ENCODE measurements at regions of chr11 and their contacts with region 1.

Region 1: GRCh38 chr11:70067591-70068341 is 10.4 kb upstream of the ANO1 start:
- DNase-seq: peak; percentile 86
- H3K4me3 ChIP-seq: no peak overlapping the region
- H3K4me3 Mint-ChIP-seq: peak overlapping the region; percentile 37
- H3K27ac Mint-ChIP-seq: peak overlapping the region; percentile 71
- H3K4me1 ChIP-seq: peaks cover 48% of the 10 kb centered on the region
- H3K4me1 Mint-ChIP-seq: peaks cover 38% of the 10 kb centered on the region
- H3K27me3 ChIP-seq: no peaks in the 10 kb centered on the region
- H3K27me3 Mint-ChIP-seq: no peaks in the 10 kb centered on the region
- CTCF ChIP-seq: peak in 1 of 2 experiments; percentile 23

Region 2: DNA sequence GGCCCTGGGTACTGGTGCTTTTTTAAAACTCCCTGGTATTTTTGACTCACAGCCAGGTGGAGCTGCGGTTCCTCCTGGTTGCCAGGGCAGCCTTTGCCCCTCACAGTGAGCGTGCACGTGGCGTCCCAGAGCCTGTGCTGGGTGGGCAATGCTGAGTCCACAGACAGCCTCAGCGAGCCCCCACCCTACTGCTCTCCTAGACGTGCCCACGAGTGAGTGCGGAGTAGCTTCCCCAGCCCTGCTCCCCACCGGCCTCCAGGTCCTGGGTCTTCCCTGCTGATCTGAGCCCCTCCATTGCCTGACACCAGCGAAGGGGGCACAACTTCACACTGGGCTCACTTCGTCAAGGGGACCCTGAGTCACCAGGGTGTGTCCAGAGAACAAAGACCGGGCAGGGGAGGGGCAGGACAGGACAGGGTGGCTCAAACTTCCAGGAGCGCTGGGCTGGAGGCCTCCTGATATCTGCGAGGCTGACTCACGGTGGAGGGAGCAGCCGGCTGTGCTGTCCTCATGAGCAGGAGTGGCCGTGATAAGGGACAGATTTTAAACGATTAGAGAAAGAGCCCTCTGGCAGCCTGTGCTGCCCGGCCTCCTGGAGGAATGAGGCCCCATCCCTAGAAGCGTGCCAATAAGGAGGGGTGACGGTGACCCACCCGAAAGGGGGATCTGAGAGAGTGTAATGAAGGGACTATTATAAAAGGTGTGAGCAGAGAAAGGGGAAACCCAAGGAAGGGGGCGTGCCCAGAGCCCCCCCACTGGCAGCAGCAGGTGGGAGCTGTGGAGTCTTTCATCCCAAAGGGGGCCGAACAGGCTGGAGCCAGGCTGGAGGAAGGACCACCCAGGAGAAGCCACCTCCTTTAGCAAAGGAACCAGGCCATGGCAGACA is 119.3 kb before region 1 on chr11:
- CTCF ChIA-PET with region 1: interaction called, 5 read pairs
- POLR2A ChIA-PET with region 1: no interaction called
- intact Hi-C with region 1: loop called (anchors 1 kb)
- DNase-seq: peak; percentile 86 to 94
- H3K4me3 ChIP-seq: no peak overlapping the region
- H3K4me3 Mint-ChIP-seq: peak overlapping the region; percentile 47
- H3K27ac Mint-ChIP-seq: peak overlapping the region; percentile 93
- H3K4me1 ChIP-seq: peaks cover 44% of the 10 kb centered on the region
- H3K4me1 Mint-ChIP-seq: peaks cover 31% of the 10 kb centered on the region
- H3K27me3 ChIP-seq: no peaks in the 10 kb centered on the region
- H3K27me3 Mint-ChIP-seq: no peaks in the 10 kb centered on the region
- CTCF ChIP-seq: peak; percentile 53 to 62

Region 3: DNA sequence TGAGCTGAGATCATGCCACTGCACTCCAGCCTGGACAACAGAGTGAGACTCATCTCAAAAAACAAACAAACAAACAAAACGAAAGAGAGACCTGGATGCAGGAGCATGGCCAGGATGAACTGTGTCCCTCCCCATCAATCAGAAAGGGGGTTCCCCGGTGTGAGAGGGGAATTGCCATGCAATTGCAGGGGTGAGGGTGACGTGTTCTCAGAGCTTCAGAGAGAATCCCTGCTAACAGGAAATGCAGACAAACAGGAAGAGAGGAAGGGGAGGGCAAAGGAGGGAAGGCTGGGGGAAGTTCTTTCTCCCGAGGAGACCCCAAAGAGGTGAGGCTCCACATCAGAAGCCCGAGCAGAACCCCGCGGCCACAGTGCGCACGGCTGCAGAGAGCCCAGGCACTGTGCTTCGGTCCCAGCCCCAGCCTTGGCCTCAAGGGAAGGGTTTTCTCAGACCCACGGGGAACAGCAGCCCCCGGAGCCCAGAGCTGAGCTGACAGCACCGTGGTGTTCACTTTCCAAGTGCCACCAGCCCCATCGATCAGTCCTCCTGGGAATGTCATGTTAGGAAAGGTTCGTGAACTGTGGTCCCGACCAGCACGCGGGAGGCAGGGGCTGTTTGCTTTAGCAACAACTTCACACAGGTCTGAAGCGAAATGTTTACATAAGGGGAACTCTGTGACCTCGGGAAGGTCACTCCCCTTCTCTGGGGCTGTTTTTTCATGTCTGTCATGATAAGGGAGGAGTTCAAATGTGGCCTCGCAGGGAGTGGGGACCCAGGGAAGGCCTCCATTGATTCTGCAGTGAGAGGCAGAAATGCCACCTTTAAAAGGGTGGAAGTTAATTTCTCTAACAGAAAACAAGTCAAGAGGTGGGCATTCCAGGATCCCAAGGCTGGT is 97.6 kb before region 1 on chr11:
- CTCF ChIA-PET with region 1: interaction called, 3 read pairs
- POLR2A ChIA-PET with region 1: no interaction called
- intact Hi-C with region 1: loop called (anchors 1 kb)
- DNase-seq: peak; percentile 89 to 94
- H3K4me3 ChIP-seq: no peak overlapping the region
- H3K4me3 Mint-ChIP-seq: peak overlapping the region; percentile 61
- H3K27ac Mint-ChIP-seq: peak overlapping the region; percentile 88
- H3K4me1 ChIP-seq: peaks cover 94% of the 10 kb centered on the region
- H3K4me1 Mint-ChIP-seq: peaks cover 63% of the 10 kb centered on the region
- H3K27me3 ChIP-seq: no peaks in the 10 kb centered on the region
- H3K27me3 Mint-ChIP-seq: no peaks in the 10 kb centered on the region
- CTCF ChIP-seq: no peak

Region 4: DNA sequence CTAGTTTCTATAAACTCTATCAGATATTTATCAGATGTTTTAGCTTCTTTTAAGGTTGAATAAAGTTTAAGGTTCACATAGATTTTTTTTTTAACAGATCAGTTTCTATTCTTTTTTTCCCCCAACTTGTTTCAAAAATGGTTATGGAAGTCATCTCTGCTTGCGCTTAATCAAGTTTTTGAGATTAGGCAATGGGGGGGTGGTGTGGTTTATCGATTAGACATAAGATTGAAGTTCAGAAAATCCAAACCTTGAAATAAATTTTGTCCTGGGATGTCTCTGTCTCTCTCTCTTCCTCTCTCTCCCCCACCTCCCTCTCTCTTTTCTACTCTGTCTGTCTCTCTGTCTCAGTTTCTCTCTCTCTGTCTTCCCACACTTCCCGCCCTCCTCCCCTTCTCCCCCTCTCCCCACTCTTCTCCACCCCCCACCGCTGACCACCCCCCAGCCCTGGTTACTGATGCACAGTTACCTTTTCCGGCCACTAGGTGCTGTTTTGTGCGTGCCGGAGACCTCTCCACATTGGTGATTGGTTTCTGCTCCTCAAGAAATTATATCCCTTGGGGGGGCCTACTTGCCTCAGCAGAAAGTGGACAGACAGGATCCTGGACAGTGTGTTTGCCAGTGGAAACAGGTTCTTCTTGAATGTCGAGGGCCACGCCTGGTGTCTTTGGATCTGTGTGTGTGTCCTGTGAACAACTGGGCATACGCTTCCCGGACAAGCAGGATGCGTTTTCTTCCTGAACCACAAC is 19.3 kb before region 1 on chr11:
- CTCF ChIA-PET with region 1: interaction called, 6 read pairs
- POLR2A ChIA-PET with region 1: no interaction called
- intact Hi-C with region 1: loop called (anchors 1 kb)
- DNase-seq: peak; percentile 84 to 87
- H3K4me3 ChIP-seq: no peak overlapping the region
- H3K4me3 Mint-ChIP-seq: no peak overlapping the region
- H3K27ac Mint-ChIP-seq: no peak overlapping the region
- H3K4me1 ChIP-seq: peaks cover 9% of the 10 kb centered on the region
- H3K4me1 Mint-ChIP-seq: peaks cover 10% of the 10 kb centered on the region
- H3K27me3 ChIP-seq: no peaks in the 10 kb centered on the region
- H3K27me3 Mint-ChIP-seq: peaks cover 5% of the 10 kb centered on the region
- CTCF ChIP-seq: peak; percentile 81 to 93

Region 5: GRCh38 chr11:70141486-70142220 is 73.9 kb after region 1 on chr11:
- CTCF ChIA-PET with region 1: no interaction called
- POLR2A ChIA-PET with region 1: no interaction called
- intact Hi-C with region 1: no loop called
- DNase-seq: no peak
- H3K4me3 ChIP-seq: no peak overlapping the region
- H3K4me3 Mint-ChIP-seq: no peak overlapping the region
- H3K27ac Mint-ChIP-seq: peak overlapping the region; percentile 36
- H3K4me1 ChIP-seq: peaks cover 29% of the 10 kb centered on the region
- H3K4me1 Mint-ChIP-seq: peaks cover 24% of the 10 kb centered on the region
- H3K27me3 ChIP-seq: no peaks in the 10 kb centered on the region
- H3K27me3 Mint-ChIP-seq: no peaks in the 10 kb centered on the region
- CTCF ChIP-seq: no peak

Measured in Caco-2 (cell line).